PC-3 (cell line): ENCODE measurements at regions of chr11 and their contacts with region 1.

Region 1: GRCh38 chr11:43852057-43852636 is 28.5 kb upstream of the ALKBH3 start:
- DNase-seq: peak; percentile 76
- ATAC-seq: peak; percentile 74
- H3K4me3 ChIP-seq: no peak overlapping the region
- H3K27ac ChIP-seq: no peak overlapping the region
- H3K4me1 ChIP-seq: no peaks in the 10 kb centered on the region
- H3K27me3 ChIP-seq: no peaks in the 10 kb centered on the region
- CTCF ChIP-seq: peak; percentile 94

Region 2: DNA sequence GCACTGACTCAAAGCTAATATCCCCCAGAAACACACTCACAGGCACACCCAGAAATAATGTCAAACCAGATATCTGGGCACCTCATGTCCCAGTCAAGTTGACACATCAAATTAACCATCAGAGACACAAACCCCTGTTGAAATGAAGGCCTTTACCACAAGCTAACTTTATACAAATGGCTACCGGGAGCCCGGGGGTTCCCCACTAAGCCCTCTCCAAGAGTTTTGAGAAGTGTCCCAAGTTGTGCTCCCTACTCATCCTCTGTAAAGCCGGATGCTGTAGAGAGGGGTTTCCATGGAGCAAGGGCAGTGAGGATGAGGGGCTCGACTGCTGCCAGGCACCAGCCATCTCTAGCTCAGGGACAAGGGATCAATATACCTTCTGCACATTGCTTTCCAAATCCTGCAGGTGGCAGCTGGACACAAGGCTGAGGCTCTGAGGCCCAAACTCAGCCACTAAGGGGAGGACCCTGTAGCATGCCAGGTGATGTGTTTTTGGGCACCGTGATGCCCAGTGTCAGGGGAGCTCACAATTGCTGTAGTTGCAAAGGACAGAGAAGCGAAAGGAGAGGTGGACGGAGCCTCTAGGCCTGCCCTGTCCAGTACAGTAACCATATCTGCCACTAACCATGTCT is 347.7 kb before region 1 on chr11:
- CTCF ChIA-PET with region 1: interaction called, 8 read pairs
- POLR2A ChIA-PET with region 1: interaction called, 4 read pairs
- intact Hi-C with region 1: loop called (anchors 5 kb)
- DNase-seq: peak; percentile 53
- ATAC-seq: peak; percentile 89
- H3K4me3 ChIP-seq: no peak overlapping the region
- H3K27ac ChIP-seq: no peak overlapping the region
- H3K4me1 ChIP-seq: no peaks in the 10 kb centered on the region; the same call in 1 of the 2 replicates
- H3K27me3 ChIP-seq: 0 out of 2 replicates have a peak, but pooled peaks cover 3% of the 10 kb centered on the region
- CTCF ChIP-seq: peak; percentile 62

Region 3: DNA sequence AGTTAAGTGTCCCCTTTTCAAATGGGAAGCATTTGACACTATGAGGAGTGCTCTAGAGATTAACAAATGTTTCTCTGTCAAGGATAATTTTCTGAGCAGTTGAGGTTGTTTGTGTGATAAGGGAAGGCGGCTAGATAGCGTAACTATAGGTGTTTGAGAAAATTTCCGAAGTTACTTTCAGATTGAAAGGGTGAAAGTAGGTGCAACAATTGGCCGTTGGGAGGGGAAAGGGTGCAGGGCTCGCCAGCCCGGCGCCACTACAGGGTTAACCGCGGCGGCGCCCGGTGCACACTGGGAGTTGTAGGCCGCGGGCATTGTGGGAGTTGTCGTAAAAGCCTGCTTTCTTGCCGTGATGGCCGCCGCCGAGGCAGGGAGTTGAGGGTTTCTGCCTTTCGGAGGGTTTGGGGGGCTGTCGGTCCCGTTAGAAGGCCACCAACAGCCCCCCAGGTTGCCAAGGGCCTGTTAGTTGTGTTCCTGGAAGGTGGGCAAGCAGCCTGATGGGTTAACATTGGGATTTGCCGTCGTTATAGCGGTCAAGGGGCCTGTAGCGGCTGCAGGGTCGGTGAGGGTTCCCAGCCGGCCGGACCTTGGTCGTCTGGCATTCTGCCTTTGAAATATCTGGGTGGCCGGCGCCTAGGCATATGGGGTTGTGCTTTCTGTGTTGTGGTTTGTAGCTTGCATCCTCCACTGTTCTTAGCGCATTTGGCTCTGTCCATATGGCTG is 208.1 kb before region 1 on chr11:
- CTCF ChIA-PET with region 1: no interaction called
- POLR2A ChIA-PET with region 1: no interaction called
- intact Hi-C with region 1: loop called (anchors 5 kb)
- DNase-seq: peak; percentile 74
- ATAC-seq: peak; percentile 99
- H3K4me3 ChIP-seq: peak overlapping the region; percentile 94
- H3K27ac ChIP-seq: peak overlapping the region; percentile 14; the same call in 1 of the 2 replicates
- H3K4me1 ChIP-seq: peaks cover 15% of the 10 kb centered on the region
- H3K27me3 ChIP-seq: peaks cover 25% of the 10 kb centered on the region
- CTCF ChIP-seq: no peak

Region 4: GRCh38 chr11:43680521-43681400 is 171.4 kb before region 1 on chr11 and contains the start of gene HSD17B12:
- CTCF ChIA-PET with region 1: interaction called, 5 read pairs
- POLR2A ChIA-PET with region 1: interaction called, 4 read pairs
- intact Hi-C with region 1: loop called (anchors 5 kb)
- DNase-seq: peak; percentile 99
- ATAC-seq: peak; percentile 96
- H3K4me3 ChIP-seq: peak within 1 kb of the TSS; percentile 98
- H3K27ac ChIP-seq: peak within 1 kb of the TSS; percentile 76
- H3K4me1 ChIP-seq: peaks cover 17% of the 10 kb centered on the region
- H3K27me3 ChIP-seq: no peaks in the 10 kb centered on the region
- CTCF ChIP-seq: no peak
- total RNA-seq, gene HSD17B12: 77.6 and 102 TPM in 2 replicates

Region 5: GRCh38 chr11:43825217-43825816 is 26.8 kb before region 1 on chr11:
- CTCF ChIA-PET with region 1: interaction called, 8 read pairs
- POLR2A ChIA-PET with region 1: no interaction called
- intact Hi-C with region 1: loop called (anchors 1 kb)
- DNase-seq: peak; percentile 59
- ATAC-seq: peak; percentile 67
- H3K4me3 ChIP-seq: no peak overlapping the region
- H3K27ac ChIP-seq: no peak overlapping the region
- H3K4me1 ChIP-seq: peaks cover 7% of the 10 kb centered on the region
- H3K27me3 ChIP-seq: no peaks in the 10 kb centered on the region
- CTCF ChIP-seq: peak; percentile 88

Region 6: DNA sequence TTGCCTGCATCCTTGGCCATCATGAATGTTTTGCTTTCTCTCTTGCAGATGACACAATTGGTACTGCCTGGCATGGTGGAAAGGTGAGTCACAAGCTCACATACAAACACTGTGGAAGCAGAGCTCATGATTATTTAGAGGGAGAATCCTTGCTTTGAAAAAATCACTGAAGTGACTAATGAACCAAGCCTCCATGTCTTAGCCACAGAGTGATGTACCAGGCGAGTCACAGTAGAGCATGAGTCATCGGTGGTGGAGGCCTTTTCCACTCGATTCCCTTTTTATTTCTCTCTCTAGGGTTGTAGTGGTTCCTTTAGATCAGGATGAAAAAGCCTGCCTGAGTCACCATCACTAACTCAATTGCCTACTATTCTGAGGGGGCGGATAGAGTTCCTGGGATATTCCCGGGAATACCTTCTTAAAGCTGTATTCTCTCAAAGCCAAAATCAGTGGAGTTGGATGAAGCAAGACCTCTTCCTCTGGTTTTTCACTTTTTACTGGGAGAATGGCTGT is 21.2 kb before region 1 on chr11:
- CTCF ChIA-PET with region 1: interaction called, 15 read pairs
- POLR2A ChIA-PET with region 1: no interaction called
- intact Hi-C with region 1: loop called (anchors 1 kb)
- DNase-seq: peak; percentile 97
- ATAC-seq: peak; percentile 100
- H3K4me3 ChIP-seq: no peak overlapping the region
- H3K27ac ChIP-seq: peak overlapping the region; percentile 60
- H3K4me1 ChIP-seq: peaks cover 20% of the 10 kb centered on the region
- H3K27me3 ChIP-seq: no peaks in the 10 kb centered on the region
- CTCF ChIP-seq: no peak

Region 7: DNA sequence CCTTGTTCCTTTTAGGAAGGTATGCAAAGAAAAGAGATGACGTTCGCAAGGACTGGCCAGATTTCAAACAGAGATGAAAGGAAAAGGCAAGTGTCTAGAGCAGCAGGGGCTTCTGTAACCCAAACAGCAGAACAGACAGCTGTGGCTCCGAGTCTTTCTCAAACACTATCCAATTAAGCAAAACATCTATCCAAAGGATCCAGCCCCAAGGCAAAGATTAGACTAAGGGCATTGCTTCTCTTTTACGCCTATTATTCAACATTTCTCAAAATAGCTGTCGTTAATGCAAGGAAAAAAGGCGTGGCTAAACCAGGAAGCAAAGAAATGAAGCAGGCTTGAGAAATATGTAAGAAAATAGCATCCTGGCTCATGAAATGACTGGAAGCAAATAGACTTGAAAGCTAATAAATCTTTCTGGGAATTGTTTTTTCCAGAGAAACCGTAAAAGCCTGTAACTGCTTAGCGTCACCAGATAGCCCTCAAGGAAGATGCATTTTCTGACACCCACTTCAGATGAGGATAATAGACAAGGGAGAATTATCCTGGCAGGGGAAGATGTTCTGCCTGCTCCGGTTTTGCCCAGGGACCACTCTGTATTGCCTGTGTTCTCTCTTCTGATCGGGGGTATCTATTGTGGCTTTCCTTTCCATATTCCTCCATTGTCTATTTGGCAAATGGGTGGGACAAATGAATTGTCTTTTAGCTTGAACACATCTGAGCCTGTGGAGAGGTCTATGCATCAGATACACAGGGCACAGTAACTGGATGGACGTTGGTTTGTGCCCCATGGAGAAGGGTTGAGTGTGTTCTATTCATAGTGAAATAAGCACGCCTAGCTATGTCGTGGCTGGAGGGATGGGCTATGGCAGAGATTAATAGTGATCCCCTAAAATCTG is 110.5 kb after region 1 on chr11:
- CTCF ChIA-PET with region 1: no interaction called
- POLR2A ChIA-PET with region 1: no interaction called
- intact Hi-C with region 1: no loop called
- DNase-seq: no peak
- ATAC-seq: no peak
- H3K4me3 ChIP-seq: no peak overlapping the region
- H3K27ac ChIP-seq: no peak overlapping the region
- H3K4me1 ChIP-seq: no peaks in the 10 kb centered on the region
- H3K27me3 ChIP-seq: no peaks in the 10 kb centered on the region
- CTCF ChIP-seq: no peak